Naive thymus-derived CD4-positive, alpha-beta T cell (primary cell): ENCODE measurements at regions of chr1 and their contacts with region 1.

Region 1: DNA sequence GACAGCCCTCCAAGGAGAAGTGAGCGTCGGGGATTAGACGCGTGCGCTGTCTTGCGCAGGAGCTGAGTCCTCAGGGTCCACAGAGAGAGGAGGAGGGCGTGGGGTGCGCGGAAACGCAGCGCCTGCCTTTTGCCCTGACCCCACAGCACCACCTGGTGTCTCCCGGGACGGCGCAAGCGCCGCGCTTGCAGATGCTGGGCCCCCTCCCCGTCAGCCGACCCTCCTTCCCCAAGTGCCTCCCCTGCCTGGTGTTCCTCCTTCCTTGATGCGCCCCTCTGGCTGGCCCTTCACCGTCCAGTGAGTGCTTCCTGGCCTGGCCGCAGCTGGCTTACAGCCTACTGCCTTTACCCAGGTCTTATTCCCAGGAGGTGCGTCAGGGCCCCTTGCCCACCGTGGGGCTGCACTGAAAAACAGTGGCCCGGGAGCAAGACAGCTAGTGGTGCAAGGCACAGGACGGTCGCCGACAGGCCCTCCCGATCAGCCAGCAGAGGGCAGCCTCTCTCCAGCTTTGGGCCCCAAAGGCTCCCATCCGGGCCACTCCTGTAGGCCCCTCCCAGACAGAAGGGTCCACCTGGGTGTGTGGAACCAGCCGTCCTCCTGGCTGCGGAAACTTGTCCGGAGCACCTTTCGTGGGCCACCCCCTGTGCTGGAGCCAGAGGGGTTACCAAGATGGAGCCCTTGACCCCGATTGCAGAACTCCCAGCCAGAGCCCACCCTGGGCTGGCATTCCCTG is 12.9 kb upstream of the PHLDA3 start:
- DNase-seq: peak; percentile 58 to 80 (median 74)
- ATAC-seq: peak; percentile 89
- H3K4me3 ChIP-seq: peak overlapping the region; percentile 48
- H3K4me3 Mint-ChIP-seq: peak overlapping the region; percentile 71 to 84 (median 76)
- H3K27ac ChIP-seq: no peak overlapping the region
- H3K27ac Mint-ChIP-seq: no peak overlapping the region
- H3K4me1 ChIP-seq: peaks cover 15 to 19% of the 10 kb centered on the region in 2 donors
- H3K4me1 Mint-ChIP-seq: peaks cover 8 to 28% (median 23%) of the 10 kb centered on the region in 7 donors
- H3K27me3 ChIP-seq: peaks cover 0 to 14% of the 10 kb centered on the region in 2 donors
- H3K27me3 Mint-ChIP-seq: peaks cover 12 to 26% (median 20%) of the 10 kb centered on the region in 5 donors

Region 2: DNA sequence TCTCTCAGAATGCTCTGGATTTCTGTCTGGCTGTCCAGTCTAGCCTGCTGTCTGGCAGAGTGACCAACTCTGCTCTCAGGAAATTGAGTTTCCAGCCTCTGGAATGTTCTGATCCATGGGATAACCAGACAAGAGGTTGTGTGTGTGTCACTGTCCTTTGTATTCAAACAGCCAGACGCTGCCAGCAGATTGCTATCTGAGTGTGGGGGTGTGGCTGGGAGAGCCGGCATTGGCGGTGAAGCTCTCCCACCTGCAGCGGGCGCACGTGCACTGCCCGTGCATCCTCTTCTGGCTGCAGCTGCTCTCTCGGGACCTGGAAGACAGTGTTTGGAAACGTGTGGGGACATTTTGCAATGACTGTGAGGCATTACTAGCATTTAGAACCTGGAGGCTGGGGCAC is 172.5 kb before region 1 on chr1:
- CTCF ChIA-PET with region 1: no interaction called
- POLR2A ChIA-PET with region 1: no interaction called
- intact Hi-C with region 1: no loop called
- DNase-seq: no peak
- ATAC-seq: no peak
- H3K4me3 ChIP-seq: no peak overlapping the region
- H3K4me3 Mint-ChIP-seq: no peak overlapping the region
- H3K27ac ChIP-seq: no peak overlapping the region
- H3K27ac Mint-ChIP-seq: peak overlapping the region in 1 of 9 donors; percentile 56
- H3K4me1 ChIP-seq: no peaks in the 10 kb centered on the region
- H3K4me1 Mint-ChIP-seq: peaks cover 0 to 5% (median 0%) of the 10 kb centered on the region in 7 donors
- H3K27me3 ChIP-seq: peaks cover 0 to 3% of the 10 kb centered on the region in 2 donors
- H3K27me3 Mint-ChIP-seq: peaks cover 11 to 30% (median 20%) of the 10 kb centered on the region in 5 donors

Region 3: DNA sequence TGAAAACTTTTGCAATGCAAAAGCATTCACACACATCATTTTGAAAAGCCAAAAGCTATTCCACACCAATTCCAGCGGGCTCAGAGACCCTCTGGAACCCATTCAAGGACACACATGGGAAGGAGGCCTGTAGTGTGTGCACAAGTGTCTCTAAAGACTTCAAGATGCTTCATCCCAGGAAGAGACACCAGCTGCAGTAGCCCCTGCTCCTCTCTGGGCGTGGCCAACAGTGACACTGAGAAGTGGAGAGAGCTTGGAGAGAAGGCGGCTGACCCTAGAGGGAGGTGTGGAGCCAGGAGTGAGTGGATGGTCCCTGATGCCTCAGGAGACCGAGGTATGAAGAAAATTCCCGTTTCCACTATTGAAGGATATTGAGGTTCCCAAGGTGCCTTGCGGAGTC is 45.5 kb before region 1 on chr1:
- CTCF ChIA-PET with region 1: no interaction called
- POLR2A ChIA-PET with region 1: no interaction called
- intact Hi-C with region 1: loop called in 1 of 2 experiments (anchors 1 kb)
- DNase-seq: no peak
- ATAC-seq: no peak
- H3K4me3 ChIP-seq: no peak overlapping the region
- H3K4me3 Mint-ChIP-seq: peak overlapping the region in 1 of 10 donors; percentile 26
- H3K27ac ChIP-seq: no peak overlapping the region
- H3K27ac Mint-ChIP-seq: peak overlapping the region in 1 of 9 donors; percentile 64
- H3K4me1 ChIP-seq: no peaks in the 10 kb centered on the region
- H3K4me1 Mint-ChIP-seq: peaks cover 3 to 10% (median 7%) of the 10 kb centered on the region in 7 donors
- H3K27me3 ChIP-seq: no peaks in the 10 kb centered on the region
- H3K27me3 Mint-ChIP-seq: peaks cover 11 to 34% (median 15%) of the 10 kb centered on the region in 5 donors

Region 4: DNA sequence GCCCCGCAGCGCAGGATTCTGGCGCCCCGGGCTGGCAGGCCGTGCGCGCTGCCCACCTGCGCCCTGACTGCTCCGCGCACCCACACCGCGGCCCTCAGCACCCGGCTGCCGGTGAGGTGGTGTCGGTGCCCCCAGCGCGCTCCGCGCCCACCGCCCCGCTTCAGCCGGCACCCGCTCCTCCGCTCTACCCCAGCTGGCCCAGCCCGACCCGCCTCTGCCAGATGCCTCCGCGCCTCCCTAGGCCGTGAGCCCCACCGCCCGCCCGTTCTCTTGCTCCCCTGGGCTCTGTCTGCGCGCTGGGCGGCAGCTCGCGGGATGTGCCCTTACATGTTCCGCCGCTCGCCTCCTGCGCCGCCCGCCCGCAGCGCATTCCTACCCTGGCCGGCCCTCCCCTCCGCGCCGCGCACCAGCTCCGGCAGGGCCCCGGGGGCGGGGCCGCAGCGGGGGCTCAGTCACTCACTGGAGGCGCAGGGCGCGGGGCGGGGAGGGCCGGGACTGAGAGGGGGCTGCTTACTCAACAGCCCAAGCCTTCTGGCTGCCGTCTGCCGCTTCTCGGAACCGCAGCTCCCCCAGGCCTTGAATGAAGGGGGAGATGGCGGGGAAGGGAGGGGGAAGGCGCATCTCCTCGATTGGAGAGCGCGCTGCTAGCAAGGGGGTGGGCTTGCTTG is 12.9 kb before region 1 on chr1 and contains the start of gene PHLDA3:
- CTCF ChIA-PET with region 1: interaction called, 3 read pairs
- POLR2A ChIA-PET with region 1: no interaction called
- intact Hi-C with region 1: loop called in 1 of 2 experiments (anchors 1 kb)
- DNase-seq: peak in 1 of 9 donors; percentile 77
- ATAC-seq: peak; percentile 66
- H3K4me3 ChIP-seq: no peak within 1 kb of the TSS
- H3K4me3 Mint-ChIP-seq: peak within 1 kb of the TSS in 9 of 10 donors; percentile 23 to 92 (median 55)
- H3K27ac ChIP-seq: no peak within 1 kb of the TSS
- H3K27ac Mint-ChIP-seq: peak within 1 kb of the TSS in 1 of 9 donors; percentile 74
- H3K4me1 ChIP-seq: no peaks in the 10 kb centered on the region
- H3K4me1 Mint-ChIP-seq: peaks cover 0 to 22% (median 8%) of the 10 kb centered on the region in 7 donors
- H3K27me3 ChIP-seq: peaks cover 0 to 6% of the 10 kb centered on the region in 2 donors
- H3K27me3 Mint-ChIP-seq: peaks cover 39 to 55% (median 40%) of the 10 kb centered on the region in 5 donors
- total RNA-seq, gene PHLDA3: 0.19 to 22.4 (median 1.1) TPM

Region 5: DNA sequence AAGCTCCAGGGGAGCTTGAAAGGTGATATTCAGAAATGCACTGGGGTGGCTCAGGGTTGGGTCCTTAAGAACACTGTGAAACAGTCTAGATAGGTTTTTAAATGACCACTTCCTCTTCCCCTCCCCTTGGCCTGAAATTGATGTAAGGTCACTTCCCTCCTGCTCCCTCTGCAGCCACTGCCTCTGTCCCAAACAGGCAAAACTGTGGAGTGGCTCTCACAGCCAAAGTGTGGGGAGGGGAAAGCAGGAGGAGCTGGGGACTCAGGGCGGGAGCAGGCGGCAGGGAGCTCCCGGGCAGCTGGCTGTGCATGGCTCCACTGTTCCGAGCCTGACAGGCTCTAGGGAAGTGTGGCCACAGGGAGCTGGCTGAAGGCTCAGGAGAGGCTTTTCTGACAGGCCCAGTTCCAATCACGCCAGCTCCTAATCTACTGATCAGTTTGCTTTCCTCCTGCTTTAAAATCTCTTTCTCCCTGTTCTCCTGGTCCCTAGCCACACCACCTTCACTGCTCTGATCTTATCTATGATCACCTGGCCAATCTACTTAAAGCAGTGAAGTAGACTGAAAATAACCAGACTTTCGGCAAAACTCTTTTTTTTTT is 30.1 kb after region 1 on chr1:
- CTCF ChIA-PET with region 1: interaction called, 215 read pairs
- POLR2A ChIA-PET with region 1: interaction called, 10 read pairs
- intact Hi-C with region 1: loop called (anchors 1 kb)
- DNase-seq: no peak
- ATAC-seq: peak; percentile 14
- H3K4me3 ChIP-seq: no peak overlapping the region
- H3K4me3 Mint-ChIP-seq: no peak overlapping the region
- H3K27ac ChIP-seq: no peak overlapping the region
- H3K27ac Mint-ChIP-seq: no peak overlapping the region
- H3K4me1 ChIP-seq: peaks cover 9 to 10% of the 10 kb centered on the region in 2 donors
- H3K4me1 Mint-ChIP-seq: peaks cover 0 to 28% (median 19%) of the 10 kb centered on the region in 7 donors
- H3K27me3 ChIP-seq: no peaks in the 10 kb centered on the region
- H3K27me3 Mint-ChIP-seq: no peaks in the 10 kb centered on the region

Region 6: GRCh38 chr1:201648066-201648906 is 166.4 kb after region 1 on chr1:
- CTCF ChIA-PET with region 1: no interaction called
- POLR2A ChIA-PET with region 1: no interaction called
- intact Hi-C with region 1: no loop called
- DNase-seq: no peak
- ATAC-seq: peak; percentile 22
- H3K4me3 ChIP-seq: no peak overlapping the region
- H3K4me3 Mint-ChIP-seq: peak overlapping the region in 4 of 10 donors; percentile 49 to 62 (median 56)
- H3K27ac ChIP-seq: no peak overlapping the region
- H3K27ac Mint-ChIP-seq: no peak overlapping the region
- H3K4me1 ChIP-seq: no peaks in the 10 kb centered on the region
- H3K4me1 Mint-ChIP-seq: peaks cover 0 to 12% (median 0%) of the 10 kb centered on the region in 7 donors
- H3K27me3 ChIP-seq: no peaks in the 10 kb centered on the region
- H3K27me3 Mint-ChIP-seq: peaks cover 32 to 65% (median 33%) of the 10 kb centered on the region in 5 donors

Region 7: GRCh38 chr1:201703621-201704439 is 221.9 kb after region 1 on chr1:
- CTCF ChIA-PET with region 1: no interaction called
- POLR2A ChIA-PET with region 1: no interaction called
- intact Hi-C with region 1: loop called in 1 of 2 experiments (anchors 2 kb)
- DNase-seq: peak; percentile 13 to 69 (median 46)
- ATAC-seq: peak; percentile 82
- H3K4me3 ChIP-seq: no peak overlapping the region
- H3K4me3 Mint-ChIP-seq: peak overlapping the region in 1 of 10 donors; percentile 14
- H3K27ac ChIP-seq: no peak overlapping the region
- H3K27ac Mint-ChIP-seq: no peak overlapping the region
- H3K4me1 ChIP-seq: no peaks in the 10 kb centered on the region
- H3K4me1 Mint-ChIP-seq: peaks cover 0 to 3% (median 0%) of the 10 kb centered on the region in 7 donors
- H3K27me3 ChIP-seq: peaks cover 3 to 4% of the 10 kb centered on the region in 2 donors
- H3K27me3 Mint-ChIP-seq: peaks cover 0 to 7% (median 0%) of the 10 kb centered on the region in 5 donors

Region 8: DNA sequence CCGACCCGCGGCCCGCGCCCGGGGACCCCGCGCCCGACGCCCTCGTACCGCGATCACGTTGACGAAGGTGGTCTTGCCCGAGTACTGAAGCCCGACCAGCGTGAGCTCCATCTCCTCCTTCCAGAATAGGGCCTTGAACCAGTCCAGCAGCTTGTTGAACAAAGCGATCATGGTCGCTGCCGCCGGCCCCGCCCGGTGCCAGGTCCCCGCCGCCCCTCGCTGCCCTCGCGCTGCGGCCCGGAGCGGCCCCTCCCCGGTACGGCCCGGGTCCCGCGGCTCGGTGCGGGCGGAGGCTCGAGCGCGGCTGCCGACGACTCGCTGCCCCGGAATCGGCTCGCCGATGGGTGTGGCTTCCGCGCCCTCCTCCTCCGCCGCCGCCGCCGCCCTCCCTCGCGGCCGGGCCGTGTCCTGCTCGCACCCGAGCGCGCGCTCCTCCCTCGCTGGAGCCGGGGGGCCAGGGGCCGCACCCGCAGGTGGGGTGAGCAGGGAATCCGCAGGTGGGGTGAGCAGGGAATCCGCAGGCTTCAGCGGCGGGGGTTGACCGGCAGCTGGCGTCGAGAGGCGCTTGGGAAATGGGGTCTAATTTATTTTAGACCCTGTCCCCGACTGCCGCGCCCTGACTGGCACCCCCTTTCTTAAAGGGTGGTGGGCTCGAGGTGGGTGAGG is 662.6 kb after region 1 on chr1 and contains the start of gene ARL8A:
- CTCF ChIA-PET with region 1: no interaction called
- POLR2A ChIA-PET with region 1: no interaction called
- intact Hi-C with region 1: loop called in 1 of 2 experiments (anchors 10 kb)
- DNase-seq: peak; percentile 47 to 81 (median 62)
- ATAC-seq: peak; percentile 81
- H3K4me3 ChIP-seq: peak within 1 kb of the TSS; percentile 83
- H3K4me3 Mint-ChIP-seq: peak within 1 kb of the TSS; percentile 90 to 98 (median 93)
- H3K27ac ChIP-seq: peak within 1 kb of the TSS; percentile 83
- H3K27ac Mint-ChIP-seq: peak within 1 kb of the TSS; percentile 85 to 98 (median 92)
- H3K4me1 ChIP-seq: peaks cover 14 to 21% of the 10 kb centered on the region in 2 donors
- H3K4me1 Mint-ChIP-seq: peaks cover 16 to 44% (median 38%) of the 10 kb centered on the region in 7 donors
- H3K27me3 ChIP-seq: no peaks in the 10 kb centered on the region
- H3K27me3 Mint-ChIP-seq: no peaks in the 10 kb centered on the region
- total RNA-seq, gene ARL8A: 38.2 to 99.4 (median 54.3) TPM